ENCODE measurements at regions of chr1 and their contacts with region 1.

Region 1: DNA sequence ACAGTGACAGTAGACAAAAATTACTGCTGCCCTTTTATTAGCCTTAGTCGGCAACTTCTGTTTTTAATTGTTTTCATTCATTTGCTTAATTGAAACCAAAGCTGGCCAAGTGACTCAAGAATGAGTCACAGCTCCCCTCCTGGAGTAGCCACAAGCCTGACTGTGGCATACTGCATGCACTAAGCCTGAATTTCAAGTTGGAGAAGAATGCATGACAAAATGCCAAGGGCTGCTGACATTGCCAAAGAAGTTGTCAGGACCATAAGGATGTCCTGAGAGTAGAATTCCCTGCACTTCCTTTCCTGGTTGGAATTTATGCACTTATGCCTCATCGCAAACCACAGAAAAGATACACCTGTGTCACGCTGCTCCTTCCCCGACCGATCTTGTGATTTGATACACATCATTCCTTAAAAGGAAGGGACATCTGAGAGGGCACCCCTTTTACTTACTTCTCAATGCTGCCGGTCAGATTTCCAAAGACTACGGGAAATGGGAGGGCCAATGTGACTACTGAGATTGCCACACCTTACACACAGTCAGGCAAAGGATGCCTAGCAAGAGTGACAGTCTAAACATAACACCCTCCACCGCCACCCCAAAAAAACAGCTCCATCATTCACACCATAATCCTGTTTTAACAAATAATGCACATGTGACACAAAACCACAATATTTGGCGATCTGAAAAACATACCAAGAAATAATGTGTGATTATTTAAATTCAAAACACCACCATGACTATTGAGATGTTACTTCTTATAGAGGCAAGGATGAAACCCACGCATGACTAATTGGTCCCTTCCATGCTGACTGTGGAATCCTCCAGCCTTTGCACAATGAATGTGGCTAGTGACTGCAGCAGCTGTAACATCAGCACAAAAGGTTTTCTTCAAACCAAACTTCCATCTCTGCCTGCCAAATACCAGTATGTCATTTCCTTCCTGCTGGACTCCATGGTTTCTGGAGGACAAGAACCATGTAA is 28.2 kb downstream of the VAV3 start:
- DNase-seq: peak; percentile 68
- H3K4me3 Mint-ChIP-seq: peak overlapping the region; percentile 53
- H3K27ac Mint-ChIP-seq: peak overlapping the region; percentile 87
- H3K4me1 Mint-ChIP-seq: peaks cover 41% of the 10 kb centered on the region
- H3K27me3 Mint-ChIP-seq: no peaks in the 10 kb centered on the region

Region 2: DNA sequence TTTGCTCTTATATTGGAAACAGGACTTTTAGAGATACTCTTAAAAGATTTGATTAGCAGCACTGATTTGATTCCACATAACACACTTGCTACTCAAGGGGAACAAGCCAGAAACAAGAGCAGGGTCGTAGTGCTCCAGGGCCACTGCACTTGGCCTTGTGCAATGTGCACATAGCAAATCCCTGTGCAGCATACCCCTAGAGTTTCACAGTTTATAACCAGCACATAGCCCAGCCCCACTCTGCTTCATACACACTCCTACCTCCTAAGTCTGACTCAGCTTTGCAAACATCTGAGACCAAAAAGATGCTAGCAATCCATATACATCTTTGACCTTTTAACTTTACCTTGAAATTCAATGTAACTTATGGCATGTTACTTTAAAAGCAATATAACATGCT is 129.4 kb before region 1 on chr1:
- intact Hi-C with region 1: loop called (anchors 1 kb)
- DNase-seq: no peak
- H3K4me3 Mint-ChIP-seq: no peak overlapping the region
- H3K27ac Mint-ChIP-seq: no peak overlapping the region
- H3K4me1 Mint-ChIP-seq: peaks cover 33% of the 10 kb centered on the region
- H3K27me3 Mint-ChIP-seq: peaks cover 2% of the 10 kb centered on the region

Region 3: DNA sequence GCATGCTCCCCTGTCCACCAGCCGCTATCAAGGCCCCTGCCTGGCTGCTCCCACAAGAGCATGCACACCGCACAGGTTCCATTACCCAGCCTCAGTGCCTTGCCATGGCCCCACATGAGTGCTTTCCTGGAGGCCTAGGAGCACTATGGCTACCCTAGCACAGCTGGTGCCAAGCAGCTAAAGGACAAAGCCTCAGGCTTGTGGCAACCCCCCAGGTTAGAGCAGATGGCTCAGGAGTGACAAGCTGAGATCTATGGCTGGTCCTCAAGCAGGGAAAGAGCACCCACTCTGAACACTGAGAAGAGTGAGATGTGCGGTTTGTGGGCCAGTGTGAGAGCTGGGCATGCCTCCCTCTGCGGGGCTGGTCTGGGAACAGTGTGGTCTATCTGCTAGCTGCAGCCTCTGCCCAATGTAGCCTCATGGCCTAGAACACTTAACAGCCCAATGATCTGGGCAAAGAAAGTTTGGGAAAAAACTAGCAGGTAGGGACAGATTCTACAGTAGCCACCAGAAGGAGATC is 101.6 kb before region 1 on chr1:
- intact Hi-C with region 1: no loop called
- DNase-seq: no peak
- H3K4me3 Mint-ChIP-seq: no peak overlapping the region
- H3K27ac Mint-ChIP-seq: no peak overlapping the region
- H3K4me1 Mint-ChIP-seq: peaks cover 3% of the 10 kb centered on the region
- H3K27me3 Mint-ChIP-seq: no peaks in the 10 kb centered on the region

Region 4: DNA sequence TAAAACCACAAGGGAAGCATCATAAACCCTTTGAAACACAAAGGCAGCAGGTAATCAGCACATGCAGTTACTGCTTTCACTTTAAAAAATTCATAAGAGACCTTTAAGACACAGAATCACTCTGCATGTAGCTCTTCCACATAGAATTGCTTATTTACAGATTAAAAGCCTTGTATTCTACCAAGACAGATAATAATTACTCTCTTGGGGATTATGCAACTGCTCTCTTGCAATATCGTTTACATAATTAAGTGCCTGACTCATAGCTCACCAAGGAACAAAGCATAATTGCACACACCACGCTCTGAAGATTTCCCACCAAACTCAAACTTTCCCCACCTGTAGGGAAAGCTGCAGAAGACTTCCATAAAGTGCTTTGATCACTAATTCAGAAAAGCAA is 59.7 kb before region 1 on chr1:
- intact Hi-C with region 1: loop called (anchors 5 kb)
- DNase-seq: no peak
- H3K4me3 Mint-ChIP-seq: no peak overlapping the region
- H3K27ac Mint-ChIP-seq: no peak overlapping the region
- H3K4me1 Mint-ChIP-seq: peaks cover 2% of the 10 kb centered on the region
- H3K27me3 Mint-ChIP-seq: no peaks in the 10 kb centered on the region

Region 5: GRCh38 chr1:107895403-107896191 is 41.2 kb before region 1 on chr1:
- intact Hi-C with region 1: no loop called
- DNase-seq: no peak
- H3K4me3 Mint-ChIP-seq: no peak overlapping the region
- H3K27ac Mint-ChIP-seq: no peak overlapping the region
- H3K4me1 Mint-ChIP-seq: peaks cover 14% of the 10 kb centered on the region
- H3K27me3 Mint-ChIP-seq: no peaks in the 10 kb centered on the region

Region 6: GRCh38 chr1:107963601-107964335 is 27.0 kb after region 1 on chr1:
- intact Hi-C with region 1: loop called (anchors 1 kb)
- DNase-seq: peak; percentile 86
- H3K4me3 Mint-ChIP-seq: peak overlapping the region; percentile 91
- H3K27ac Mint-ChIP-seq: peak overlapping the region; percentile 92
- H3K4me1 Mint-ChIP-seq: peaks cover 23% of the 10 kb centered on the region
- H3K27me3 Mint-ChIP-seq: peaks cover 3% of the 10 kb centered on the region

Region 7: GRCh38 chr1:108053270-108054013 is 116.7 kb after region 1 on chr1:
- intact Hi-C with region 1: loop called (anchors 2 kb)
- DNase-seq: no peak
- H3K4me3 Mint-ChIP-seq: no peak overlapping the region
- H3K27ac Mint-ChIP-seq: no peak overlapping the region
- H3K4me1 Mint-ChIP-seq: peaks cover 22% of the 10 kb centered on the region
- H3K27me3 Mint-ChIP-seq: no peaks in the 10 kb centered on the region

Region 8: GRCh38 chr1:108661030-108661620 is 724.3 kb after region 1 on chr1 and contains the start of gene HENMT1:
- intact Hi-C with region 1: loop called (anchors 5 kb)
- DNase-seq: peak; percentile 93
- H3K4me3 Mint-ChIP-seq: peak within 1 kb of the TSS; percentile 87
- H3K27ac Mint-ChIP-seq: peak within 1 kb of the TSS; percentile 97
- H3K4me1 Mint-ChIP-seq: peaks cover 34% of the 10 kb centered on the region
- H3K27me3 Mint-ChIP-seq: no peaks in the 10 kb centered on the region
- total RNA-seq, gene HENMT1: 17.5 and 17.7 TPM in 2 replicates

Measured in activated CD4-positive, alpha-beta T cell treated with anti-CD3 and anti-CD28 coated beads, Interleukin-2, amount 10 ng/mL, durations not matched to agents 24 days and 14 days (primary cell).